CD14-positive monocyte (primary cell): ENCODE measurements at regions of chr19 and their contacts with region 1.

Region 1: GRCh38 chr19:39445265-39446111 is at the start of gene SUPT5H:
- DNase-seq: peak; percentile 97
- H3K4me3 ChIP-seq: peak within 1 kb of the TSS; percentile 55 to 100 (median 95)
- H3K4me3 Mint-ChIP-seq: peak within 1 kb of the TSS; percentile 97 to 98
- H3K27ac ChIP-seq: peak within 1 kb of the TSS; percentile 94 to 100
- H3K27ac Mint-ChIP-seq: peak within 1 kb of the TSS; percentile 89 to 100 (median 99)
- H3K4me1 ChIP-seq: peaks cover 36 to 40% of the 10 kb centered on the region in 2 donors
- H3K4me1 Mint-ChIP-seq: peaks cover 51% of the 10 kb centered on the region
- H3K27me3 ChIP-seq: no peaks in the 10 kb centered on the region
- H3K27me3 Mint-ChIP-seq: peaks cover 0 to 5% (median 3%) of the 10 kb centered on the region in 3 donors
- CTCF ChIP-seq: no peak
- polyA plus RNA-seq, gene SUPT5H: 43.6 to 83.2 (median 50.7) TPM

Region 2: GRCh38 chr19:39502640-39503417 is 57.3 kb after region 1 on chr19:
- intact Hi-C with region 1: loop called in 1 of 2 experiments (anchors 2 kb)
- DNase-seq: peak; percentile 68 to 81 (median 77)
- H3K4me3 ChIP-seq: no peak overlapping the region
- H3K4me3 Mint-ChIP-seq: peak overlapping the region in 1 of 2 donors; percentile 52
- H3K27ac ChIP-seq: no peak overlapping the region
- H3K27ac Mint-ChIP-seq: no peak overlapping the region
- H3K4me1 ChIP-seq: peaks cover 10 to 15% of the 10 kb centered on the region in 2 donors
- H3K4me1 Mint-ChIP-seq: peaks cover 19% of the 10 kb centered on the region
- H3K27me3 ChIP-seq: peaks cover 36 to 78% of the 10 kb centered on the region in 2 donors
- H3K27me3 Mint-ChIP-seq: peaks cover 69 to 89% (median 77%) of the 10 kb centered on the region in 3 donors
- CTCF ChIP-seq: peak; percentile 95

Region 3: GRCh38 chr19:39539519-39540332 is 94.2 kb after region 1 on chr19 and contains the start of gene EID2:
- intact Hi-C with region 1: loop called (anchors 5 to 10 kb)
- DNase-seq: peak; percentile 95 to 96 (median 95)
- H3K4me3 ChIP-seq: peak within 1 kb of the TSS; percentile 72 to 90 (median 79)
- H3K4me3 Mint-ChIP-seq: peak within 1 kb of the TSS; percentile 96
- H3K27ac ChIP-seq: peak within 1 kb of the TSS; percentile 83 to 87
- H3K27ac Mint-ChIP-seq: peak within 1 kb of the TSS; percentile 89 to 98 (median 95)
- H3K4me1 ChIP-seq: peaks cover 12 to 18% of the 10 kb centered on the region in 2 donors
- H3K4me1 Mint-ChIP-seq: peaks cover 25% of the 10 kb centered on the region
- H3K27me3 ChIP-seq: no peaks in the 10 kb centered on the region
- H3K27me3 Mint-ChIP-seq: peaks cover 0 to 12% (median 4%) of the 10 kb centered on the region in 3 donors
- CTCF ChIP-seq: peak; percentile 86
- polyA plus RNA-seq, gene EID2: 5.8 to 20.4 (median 12.5) TPM